ENCODE measurements at regions of chr12 and their contacts with region 1.

Region 1: GRCh38 chr12:3896801-3897331 is 23.7 kb upstream of the PARP11 start:
- DNase-seq: no peak
- H3K4me3 ChIP-seq: peak overlapping the region in 1 of 2 donors; percentile 17
- H3K4me3 Mint-ChIP-seq: peak overlapping the region; percentile 61 to 88 (median 81)
- H3K27ac ChIP-seq: peak overlapping the region; percentile 61
- H3K27ac Mint-ChIP-seq: peak overlapping the region in 5 of 7 donors; percentile 95 to 99 (median 97)
- H3K4me1 ChIP-seq: peaks cover 95% of the 10 kb centered on the region
- H3K4me1 Mint-ChIP-seq: peaks cover 0 to 40% (median 19%) of the 10 kb centered on the region in 4 donors
- H3K27me3 ChIP-seq: no peaks in the 10 kb centered on the region
- H3K27me3 Mint-ChIP-seq: no peaks in the 10 kb centered on the region

Region 2: DNA sequence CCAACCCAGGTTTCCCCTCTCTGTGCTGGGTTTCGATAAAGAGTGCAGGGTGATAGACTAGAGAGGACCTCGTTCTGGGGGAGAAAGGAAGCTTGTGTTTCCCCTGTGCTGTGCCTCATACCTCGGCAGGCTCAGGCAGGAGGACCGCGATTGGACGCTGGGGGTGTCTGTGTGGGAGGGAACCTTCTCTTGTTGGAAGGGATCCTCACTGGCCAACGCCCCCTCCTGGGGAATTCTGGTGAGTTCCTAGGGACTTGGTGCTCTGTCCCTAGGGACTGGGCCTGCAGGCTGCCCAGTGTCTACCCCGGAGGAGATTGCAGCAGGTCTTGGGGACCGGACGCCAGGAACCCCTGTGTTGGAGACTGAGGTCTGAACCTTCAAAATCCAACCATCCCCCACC is 563.3 kb before region 1 on chr12:
- CTCF ChIA-PET with region 1: no interaction called
- POLR2A ChIA-PET with region 1: no interaction called
- intact Hi-C with region 1: no loop called
- DNase-seq: no peak
- H3K4me3 ChIP-seq: no peak overlapping the region
- H3K4me3 Mint-ChIP-seq: no peak overlapping the region
- H3K27ac ChIP-seq: no peak overlapping the region
- H3K27ac Mint-ChIP-seq: no peak overlapping the region
- H3K4me1 ChIP-seq: no peaks in the 10 kb centered on the region
- H3K4me1 Mint-ChIP-seq: no peaks in the 10 kb centered on the region
- H3K27me3 ChIP-seq: no peaks in the 10 kb centered on the region
- H3K27me3 Mint-ChIP-seq: peaks cover 15 to 17% of the 10 kb centered on the region in 2 donors

Region 3: DNA sequence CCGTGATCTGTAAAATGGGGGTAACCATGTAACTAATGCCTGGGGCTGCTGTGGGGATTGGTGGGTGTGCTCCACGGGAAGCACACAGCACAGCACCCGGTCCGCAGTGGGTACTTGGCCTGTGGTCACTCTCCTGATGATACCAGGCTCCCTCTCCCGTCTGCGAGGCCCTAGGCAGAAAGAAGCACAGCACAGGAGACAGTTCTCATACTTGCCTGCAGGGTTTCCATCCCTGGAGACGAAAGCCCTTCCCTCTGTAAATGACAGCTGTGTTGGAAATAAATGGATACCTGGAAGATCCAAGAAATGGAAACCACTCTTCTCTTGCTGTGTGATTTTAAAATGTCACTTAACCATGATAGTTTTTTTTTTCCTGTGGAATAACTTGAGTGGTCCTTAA is 413.8 kb before region 1 on chr12:
- CTCF ChIA-PET with region 1: no interaction called
- POLR2A ChIA-PET with region 1: no interaction called
- intact Hi-C with region 1: no loop called
- DNase-seq: no peak
- H3K4me3 ChIP-seq: no peak overlapping the region
- H3K4me3 Mint-ChIP-seq: no peak overlapping the region
- H3K27ac ChIP-seq: no peak overlapping the region
- H3K27ac Mint-ChIP-seq: no peak overlapping the region
- H3K4me1 ChIP-seq: no peaks in the 10 kb centered on the region
- H3K4me1 Mint-ChIP-seq: no peaks in the 10 kb centered on the region
- H3K27me3 ChIP-seq: no peaks in the 10 kb centered on the region
- H3K27me3 Mint-ChIP-seq: peaks cover 32 to 47% of the 10 kb centered on the region in 2 donors

Region 4: DNA sequence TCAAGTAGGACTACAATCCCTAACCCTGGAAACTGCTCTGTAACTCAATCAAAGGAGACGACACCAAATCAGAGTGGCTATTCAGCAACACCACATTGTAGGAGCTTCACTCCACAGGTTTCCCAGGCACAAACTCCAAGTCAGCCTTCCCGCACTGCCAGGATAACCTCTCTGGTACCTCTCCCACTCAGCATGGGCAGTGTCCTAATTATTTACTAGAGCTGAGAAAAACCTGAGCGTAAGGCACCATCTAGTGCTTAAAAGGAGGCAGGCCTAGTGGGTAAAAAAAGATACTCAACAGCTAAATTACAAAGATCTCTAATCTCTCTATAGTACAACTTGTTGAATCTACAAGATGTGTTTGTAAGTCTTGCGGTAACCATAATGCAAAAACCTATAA is 59.8 kb before region 1 on chr12:
- CTCF ChIA-PET with region 1: no interaction called
- POLR2A ChIA-PET with region 1: no interaction called
- intact Hi-C with region 1: no loop called
- DNase-seq: no peak
- H3K4me3 ChIP-seq: no peak overlapping the region
- H3K4me3 Mint-ChIP-seq: peak overlapping the region in 2 of 8 donors; percentile 35 to 48
- H3K27ac ChIP-seq: no peak overlapping the region
- H3K27ac Mint-ChIP-seq: no peak overlapping the region
- H3K4me1 ChIP-seq: peaks cover 20% of the 10 kb centered on the region
- H3K4me1 Mint-ChIP-seq: peaks cover 37 to 64% (median 44%) of the 10 kb centered on the region in 4 donors
- H3K27me3 ChIP-seq: no peaks in the 10 kb centered on the region
- H3K27me3 Mint-ChIP-seq: no peaks in the 10 kb centered on the region

Region 5: GRCh38 chr12:3913278-3913677 is 16.4 kb after region 1 on chr12:
- CTCF ChIA-PET with region 1: interaction called, 6 read pairs
- POLR2A ChIA-PET with region 1: interaction called, 21 read pairs
- intact Hi-C with region 1: loop called (anchors 2 kb)
- DNase-seq: no peak
- H3K4me3 ChIP-seq: no peak overlapping the region
- H3K4me3 Mint-ChIP-seq: peak overlapping the region in 1 of 8 donors; percentile 43
- H3K27ac ChIP-seq: no peak overlapping the region
- H3K27ac Mint-ChIP-seq: peak overlapping the region; percentile 4 to 87 (median 49)
- H3K4me1 ChIP-seq: peaks cover 2% of the 10 kb centered on the region
- H3K4me1 Mint-ChIP-seq: peaks cover 2 to 15% (median 4%) of the 10 kb centered on the region in 4 donors
- H3K27me3 ChIP-seq: no peaks in the 10 kb centered on the region
- H3K27me3 Mint-ChIP-seq: no peaks in the 10 kb centered on the region

Region 6: GRCh38 chr12:3928540-3929184 is 31.8 kb after region 1 on chr12:
- CTCF ChIA-PET with region 1: interaction called, 7 read pairs
- POLR2A ChIA-PET with region 1: interaction called, 19 read pairs
- intact Hi-C with region 1: loop called (anchors 2 kb)
- DNase-seq: no peak
- H3K4me3 ChIP-seq: no peak overlapping the region
- H3K4me3 Mint-ChIP-seq: no peak overlapping the region
- H3K27ac ChIP-seq: no peak overlapping the region
- H3K27ac Mint-ChIP-seq: peak overlapping the region in 5 of 7 donors; percentile 19 to 84 (median 64)
- H3K4me1 ChIP-seq: peaks cover 41% of the 10 kb centered on the region
- H3K4me1 Mint-ChIP-seq: peaks cover 34 to 70% (median 56%) of the 10 kb centered on the region in 4 donors
- H3K27me3 ChIP-seq: no peaks in the 10 kb centered on the region
- H3K27me3 Mint-ChIP-seq: no peaks in the 10 kb centered on the region

Region 7: GRCh38 chr12:3935078-3935477 is 38.2 kb after region 1 on chr12:
- CTCF ChIA-PET with region 1: interaction called, 7 read pairs
- POLR2A ChIA-PET with region 1: interaction called, 19 read pairs
- intact Hi-C with region 1: loop called (anchors 2 kb)
- DNase-seq: peak in 4 of 5 donors; percentile 51 to 69 (median 58)
- H3K4me3 ChIP-seq: peak overlapping the region; percentile 21 to 32
- H3K4me3 Mint-ChIP-seq: peak overlapping the region; percentile 27 to 97 (median 84)
- H3K27ac ChIP-seq: no peak overlapping the region
- H3K27ac Mint-ChIP-seq: peak overlapping the region; percentile 39 to 99 (median 92)
- H3K4me1 ChIP-seq: peaks cover 55% of the 10 kb centered on the region
- H3K4me1 Mint-ChIP-seq: peaks cover 43 to 72% (median 54%) of the 10 kb centered on the region in 4 donors
- H3K27me3 ChIP-seq: no peaks in the 10 kb centered on the region
- H3K27me3 Mint-ChIP-seq: no peaks in the 10 kb centered on the region

Region 8: GRCh38 chr12:3947781-3948180 is 50.9 kb after region 1 on chr12:
- CTCF ChIA-PET with region 1: interaction called, 10 read pairs
- POLR2A ChIA-PET with region 1: interaction called, 77 read pairs
- intact Hi-C with region 1: loop called (anchors 2 kb)
- DNase-seq: peak in 4 of 5 donors; percentile 73 to 82 (median 78)
- H3K4me3 ChIP-seq: no peak overlapping the region
- H3K4me3 Mint-ChIP-seq: peak overlapping the region; percentile 31 to 84 (median 54)
- H3K27ac ChIP-seq: peak overlapping the region; percentile 57
- H3K27ac Mint-ChIP-seq: peak overlapping the region; percentile 89 to 99 (median 99)
- H3K4me1 ChIP-seq: peaks cover 65% of the 10 kb centered on the region
- H3K4me1 Mint-ChIP-seq: peaks cover 50 to 86% (median 63%) of the 10 kb centered on the region in 4 donors
- H3K27me3 ChIP-seq: no peaks in the 10 kb centered on the region
- H3K27me3 Mint-ChIP-seq: no peaks in the 10 kb centered on the region

Region 9: GRCh38 chr12:3973978-3974644 is 77.2 kb after region 1 on chr12:
- CTCF ChIA-PET with region 1: interaction called, 5 read pairs
- POLR2A ChIA-PET with region 1: interaction called, 22 read pairs
- intact Hi-C with region 1: no loop called
- DNase-seq: peak in 3 of 5 donors; percentile 20 to 46 (median 21)
- H3K4me3 ChIP-seq: peak overlapping the region in 1 of 2 donors; percentile 8
- H3K4me3 Mint-ChIP-seq: peak overlapping the region; percentile 5 to 83 (median 74)
- H3K27ac ChIP-seq: peak overlapping the region; percentile 43
- H3K27ac Mint-ChIP-seq: peak overlapping the region; percentile 75 to 93 (median 90)
- H3K4me1 ChIP-seq: peaks cover 57% of the 10 kb centered on the region
- H3K4me1 Mint-ChIP-seq: peaks cover 39 to 64% (median 51%) of the 10 kb centered on the region in 4 donors
- H3K27me3 ChIP-seq: no peaks in the 10 kb centered on the region
- H3K27me3 Mint-ChIP-seq: no peaks in the 10 kb centered on the region

Region 10: GRCh38 chr12:4037747-4038312 is 141.0 kb after region 1 on chr12:
- CTCF ChIA-PET with region 1: interaction called, 22 read pairs
- POLR2A ChIA-PET with region 1: interaction called, 3 read pairs
- intact Hi-C with region 1: no loop called
- DNase-seq: peak in 4 of 5 donors; percentile 4 to 20 (median 8)
- H3K4me3 ChIP-seq: no peak overlapping the region
- H3K4me3 Mint-ChIP-seq: no peak overlapping the region
- H3K27ac ChIP-seq: no peak overlapping the region
- H3K27ac Mint-ChIP-seq: peak overlapping the region in 1 of 7 donors; percentile 39
- H3K4me1 ChIP-seq: no peaks in the 10 kb centered on the region
- H3K4me1 Mint-ChIP-seq: peaks cover 0 to 6% (median under 1%) of the 10 kb centered on the region in 4 donors
- H3K27me3 ChIP-seq: no peaks in the 10 kb centered on the region
- H3K27me3 Mint-ChIP-seq: no peaks in the 10 kb centered on the region